Tibial artery (tissue), 4 donors: ENCODE measurements at regions of chr5 and their contacts with region 1.

Region 1: DNA sequence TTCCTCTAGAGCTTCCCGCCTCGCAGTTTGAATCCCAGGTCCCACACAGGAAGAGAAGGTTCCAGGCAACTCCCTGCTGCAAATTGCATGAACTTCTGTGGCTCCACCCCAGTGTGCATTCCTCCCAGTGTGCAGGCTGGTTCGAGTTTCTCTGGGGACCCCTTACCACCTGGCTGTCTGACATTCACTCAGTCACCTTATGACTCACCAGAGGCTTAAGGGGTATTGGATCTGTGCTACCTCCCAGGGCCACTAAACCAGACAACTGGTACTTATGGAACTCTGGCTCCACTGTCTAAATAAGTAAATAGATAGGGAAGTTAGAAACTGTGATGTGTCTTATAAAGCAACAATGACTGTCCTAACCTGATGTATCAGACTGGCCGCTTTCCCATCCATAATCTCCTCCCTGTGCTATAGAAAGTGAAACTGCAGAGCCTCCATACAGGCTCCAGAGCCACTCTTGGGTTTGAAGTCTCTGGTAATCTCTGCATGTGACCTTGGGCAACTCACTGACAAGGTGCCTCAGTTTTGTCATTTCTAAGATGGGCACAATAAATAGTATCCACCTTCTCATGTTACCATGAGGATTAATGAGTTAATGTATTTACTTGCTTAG is 720.6 kb downstream of the SEMA5A start:
- DNase-seq: no peak
- H3K4me3 ChIP-seq: no peak overlapping the region
- H3K27ac ChIP-seq: no peak overlapping the region
- H3K4me1 ChIP-seq: peaks cover 0 to 8% (median 0%) of the 10 kb centered on the region in 4 donors
- H3K27me3 ChIP-seq: no peaks in the 10 kb centered on the region
- CTCF ChIP-seq: no peak

Region 2: GRCh38 chr5:8842971-8843551 is 17.8 kb after region 1 on chr5:
- intact Hi-C with region 1: loop called (anchors 1 kb)
- DNase-seq: no peak
- H3K4me3 ChIP-seq: no peak overlapping the region
- H3K27ac ChIP-seq: no peak overlapping the region
- H3K4me1 ChIP-seq: no peaks in the 10 kb centered on the region
- H3K27me3 ChIP-seq: no peaks in the 10 kb centered on the region
- CTCF ChIP-seq: no peak